ENCODE measurements at regions of chr2 and their contacts with region 1.

Region 1: GRCh38 chr2:218406209-218406948 is 6.7 kb downstream of the CTDSP1 start:
- DNase-seq: peak; percentile 97
- H3K4me3 Mint-ChIP-seq: peak overlapping the region; percentile 71
- H3K27ac Mint-ChIP-seq: peak overlapping the region; percentile 81
- H3K4me1 Mint-ChIP-seq: peaks cover 42% of the 10 kb centered on the region
- H3K27me3 Mint-ChIP-seq: peaks cover 5% of the 10 kb centered on the region

Region 2: DNA sequence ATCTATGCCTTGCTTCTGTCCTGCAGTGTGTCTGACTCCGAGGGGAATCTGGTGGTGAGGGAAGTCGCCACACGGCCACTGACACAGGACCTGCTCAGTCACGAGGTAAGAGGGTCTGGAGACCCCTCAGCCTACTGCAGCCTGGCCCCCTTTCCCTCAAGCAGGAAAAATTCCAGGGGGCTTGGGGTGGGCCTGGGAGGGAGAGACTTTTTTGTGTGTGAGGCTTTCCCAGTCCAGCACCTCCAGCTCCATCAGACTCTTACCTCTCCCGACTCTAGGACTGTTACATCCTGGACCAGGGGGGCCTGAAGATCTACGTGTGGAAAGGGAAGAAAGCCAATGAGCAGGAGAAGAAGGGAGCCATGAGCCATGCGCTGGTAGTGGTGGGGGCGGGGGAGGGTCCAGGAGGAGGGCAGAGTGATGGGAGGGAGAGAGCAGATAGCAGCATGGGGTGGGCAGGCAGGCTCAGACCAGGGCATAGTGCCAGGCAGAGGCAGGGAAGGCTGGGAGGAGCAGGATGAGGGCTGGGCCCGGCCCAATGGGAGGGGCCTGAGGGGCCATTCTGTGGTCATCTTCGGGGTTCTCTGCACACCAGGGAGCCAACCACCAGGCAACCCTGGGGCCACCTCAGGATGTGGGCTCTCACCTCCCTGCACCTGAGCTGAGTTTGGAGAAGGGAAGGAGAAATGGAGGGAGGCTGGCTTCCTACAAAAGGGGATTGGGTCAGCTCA is 23.4 kb after region 1 on chr2:
- CTCF ChIA-PET with region 1: no interaction called
- POLR2A ChIA-PET with region 1: no interaction called
- intact Hi-C with region 1: no loop called
- DNase-seq: no peak
- H3K4me3 Mint-ChIP-seq: no peak overlapping the region
- H3K27ac Mint-ChIP-seq: no peak overlapping the region
- H3K4me1 Mint-ChIP-seq: no peaks in the 10 kb centered on the region
- H3K27me3 Mint-ChIP-seq: no peaks in the 10 kb centered on the region

Region 3: DNA sequence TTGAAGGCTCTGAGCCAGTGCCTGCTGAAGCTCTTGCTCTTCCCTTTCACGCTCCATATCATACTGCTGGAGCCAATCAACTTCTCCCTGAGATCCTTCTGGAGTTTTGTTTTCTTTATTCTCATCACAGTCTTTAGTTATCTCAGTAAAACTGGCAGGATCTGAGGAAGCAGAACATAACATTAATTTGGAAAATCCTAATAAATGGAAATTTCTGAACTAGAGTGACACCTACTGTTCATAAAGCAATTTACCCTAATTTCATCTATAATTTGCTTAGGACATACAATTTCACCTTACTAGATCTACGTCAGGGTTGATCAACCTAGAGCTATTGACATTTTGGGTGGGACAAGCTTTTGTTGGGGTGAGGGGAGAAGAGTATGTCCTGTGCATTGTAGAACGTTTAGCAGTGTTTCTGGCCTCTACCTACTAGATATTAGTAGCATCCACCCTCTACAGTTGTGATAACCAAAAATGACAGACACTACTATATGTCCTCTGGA is 59.7 kb after region 1 on chr2:
- CTCF ChIA-PET with region 1: interaction called, 5 read pairs
- POLR2A ChIA-PET with region 1: no interaction called
- intact Hi-C with region 1: loop called (anchors 2 kb)
- DNase-seq: no peak
- H3K4me3 Mint-ChIP-seq: no peak overlapping the region
- H3K27ac Mint-ChIP-seq: no peak overlapping the region
- H3K4me1 Mint-ChIP-seq: peaks cover 4% of the 10 kb centered on the region
- H3K27me3 Mint-ChIP-seq: no peaks in the 10 kb centered on the region

Region 4: DNA sequence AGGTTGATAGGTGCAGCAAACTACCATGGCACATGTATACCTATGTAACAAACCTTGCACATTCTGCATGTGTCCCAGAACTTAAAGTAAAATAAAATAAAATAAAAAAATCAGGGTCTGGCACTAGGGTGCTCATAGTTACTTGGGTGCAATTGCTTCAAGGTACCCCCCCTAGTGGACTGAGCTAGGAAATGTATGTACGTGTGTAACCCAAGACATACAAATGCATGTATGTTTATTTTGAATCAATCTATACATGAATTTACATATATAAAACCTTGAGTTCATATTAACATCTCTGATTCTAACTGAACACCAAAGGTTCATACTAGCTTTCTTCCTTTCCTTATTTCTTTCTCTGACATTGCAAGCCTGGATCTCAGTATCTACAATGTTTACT is 110.2 kb after region 1 on chr2:
- CTCF ChIA-PET with region 1: no interaction called
- POLR2A ChIA-PET with region 1: no interaction called
- intact Hi-C with region 1: loop called (anchors 5 kb)
- DNase-seq: no peak
- H3K4me3 Mint-ChIP-seq: no peak overlapping the region
- H3K27ac Mint-ChIP-seq: no peak overlapping the region
- H3K4me1 Mint-ChIP-seq: peaks cover 31% of the 10 kb centered on the region
- H3K27me3 Mint-ChIP-seq: no peaks in the 10 kb centered on the region

Region 5: DNA sequence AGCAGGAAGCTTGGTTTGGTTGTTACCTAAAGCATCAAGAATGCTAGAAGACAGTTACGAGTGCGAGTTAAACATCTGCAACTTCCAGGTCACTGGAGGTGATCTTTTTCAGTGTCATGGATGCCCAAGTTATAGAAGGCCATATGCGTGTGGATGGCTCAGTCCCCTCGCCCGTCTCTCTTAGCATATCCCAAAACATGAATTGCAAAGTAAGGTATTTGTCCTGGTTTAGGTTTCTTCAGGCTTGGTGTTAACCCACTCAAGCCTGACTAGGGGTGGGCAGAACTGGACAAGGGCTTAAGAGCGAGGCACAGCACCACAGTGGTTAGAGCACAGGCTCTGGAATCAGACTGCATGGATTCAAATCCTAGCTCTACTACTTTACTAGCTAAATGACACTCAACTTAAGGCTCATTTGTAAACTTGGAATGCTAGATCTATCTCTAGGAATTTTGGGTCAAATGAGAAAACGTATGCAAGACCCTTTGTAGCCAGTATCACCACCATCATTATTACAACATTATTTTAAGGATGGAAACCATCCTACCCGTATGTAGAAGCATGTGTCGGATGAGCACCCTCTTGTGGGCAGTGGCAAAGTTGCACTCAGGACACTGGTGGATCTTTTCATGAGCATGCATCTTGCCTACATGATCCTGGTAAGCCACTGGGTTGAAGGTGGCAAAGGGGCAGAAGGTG is 241.9 kb after region 1 on chr2:
- CTCF ChIA-PET with region 1: interaction called, 4 read pairs
- POLR2A ChIA-PET with region 1: interaction called, 3 read pairs
- intact Hi-C with region 1: loop called (anchors 1 kb)
- DNase-seq: peak; percentile 66
- H3K4me3 Mint-ChIP-seq: no peak overlapping the region
- H3K27ac Mint-ChIP-seq: no peak overlapping the region
- H3K4me1 Mint-ChIP-seq: peaks cover 9% of the 10 kb centered on the region
- H3K27me3 Mint-ChIP-seq: no peaks in the 10 kb centered on the region

Measured in activated CD4-positive, alpha-beta memory T cell treated with anti-CD3 and anti-CD28 coated beads for 36 hours (primary cell).